K562 (cell line): ENCODE measurements at regions of chr1 and their contacts with region 1.

Region 1: DNA sequence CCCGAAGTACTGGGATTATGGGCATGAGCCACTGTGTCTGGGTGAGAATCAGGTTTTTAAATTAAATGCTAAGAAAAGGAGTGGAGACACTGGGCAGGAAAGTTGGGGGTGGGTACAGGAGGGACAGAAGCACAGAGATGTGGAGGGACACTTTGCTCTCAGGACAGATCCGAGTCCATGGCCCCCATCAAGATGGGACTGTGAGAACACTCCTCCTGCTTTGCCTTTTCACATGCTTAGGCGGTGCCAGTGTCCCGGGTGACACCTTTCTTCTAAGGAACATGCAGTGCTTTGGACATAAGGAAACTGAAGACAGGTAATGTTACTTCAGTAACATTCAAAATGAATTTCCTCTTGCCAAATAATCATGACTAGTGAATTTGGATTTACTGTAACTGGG is 16.7 kb downstream of the SLC25A33 start:
- DNase-seq: no peak
- ATAC-seq: no peak
- H3K4me3 ChIP-seq: no peak overlapping the region
- H3K27ac ChIP-seq: no peak overlapping the region
- H3K4me1 ChIP-seq: peaks cover 0 to 3% of the 10 kb centered on the region in 2 experiments; a peak in 1 of 5 replicates
- H3K27me3 ChIP-seq: no peaks in the 10 kb centered on the region
- CTCF ChIP-seq: no peak
- EP300 ChIP-seq: no peak
- POLR2A ChIP-seq: no peak
- RAD21 ChIP-seq: no peak

Region 2: GRCh38 chr1:8992936-8993687 is 562.8 kb before region 1 on chr1:
- CTCF ChIA-PET with region 1: no interaction called
- POLR2A ChIA-PET with region 1: no interaction called
- in situ Hi-C with region 1: no loop called
- intact Hi-C with region 1: no loop called
- DNase-seq: no peak
- ATAC-seq: no peak
- H3K4me3 ChIP-seq: no peak overlapping the region
- H3K27ac ChIP-seq: no peak overlapping the region
- H3K4me1 ChIP-seq: no peaks in the 10 kb centered on the region
- H3K27me3 ChIP-seq: peaks cover 7 to 19% of the 10 kb centered on the region in 2 experiments; a peak in 4 of 5 replicates
- CTCF ChIP-seq: no peak
- EP300 ChIP-seq: no peak
- POLR2A ChIP-seq: no peak
- RAD21 ChIP-seq: no peak

Region 3: GRCh38 chr1:9428601-9429341 is 127.2 kb before region 1 on chr1:
- CTCF ChIA-PET with region 1: no interaction called
- POLR2A ChIA-PET with region 1: no interaction called
- in situ Hi-C with region 1: no loop called
- intact Hi-C with region 1: no loop called
- DNase-seq: peak; percentile 98 to 100 (median 98)
- ATAC-seq: peak; percentile 99
- H3K4me3 ChIP-seq: peak overlapping the region; percentile 41
- H3K27ac ChIP-seq: peak overlapping the region; percentile 57
- H3K4me1 ChIP-seq: peaks cover 5 to 10% of the 10 kb centered on the region in 2 experiments; a peak in 3 of 5 replicates
- H3K27me3 ChIP-seq: peaks cover 16 to 21% of the 10 kb centered on the region in 2 experiments
- CTCF ChIP-seq: peak in 1 of 3 experiments; percentile 20; a peak in 1 of 6 replicates
- EP300 ChIP-seq: peak; percentile 46
- POLR2A ChIP-seq: peak; percentile 84
- RAD21 ChIP-seq: 0 out of 4 replicates have a peak, but pooled peaks of 1 of the 2 experiments have one; percentile 2

Region 4: DNA sequence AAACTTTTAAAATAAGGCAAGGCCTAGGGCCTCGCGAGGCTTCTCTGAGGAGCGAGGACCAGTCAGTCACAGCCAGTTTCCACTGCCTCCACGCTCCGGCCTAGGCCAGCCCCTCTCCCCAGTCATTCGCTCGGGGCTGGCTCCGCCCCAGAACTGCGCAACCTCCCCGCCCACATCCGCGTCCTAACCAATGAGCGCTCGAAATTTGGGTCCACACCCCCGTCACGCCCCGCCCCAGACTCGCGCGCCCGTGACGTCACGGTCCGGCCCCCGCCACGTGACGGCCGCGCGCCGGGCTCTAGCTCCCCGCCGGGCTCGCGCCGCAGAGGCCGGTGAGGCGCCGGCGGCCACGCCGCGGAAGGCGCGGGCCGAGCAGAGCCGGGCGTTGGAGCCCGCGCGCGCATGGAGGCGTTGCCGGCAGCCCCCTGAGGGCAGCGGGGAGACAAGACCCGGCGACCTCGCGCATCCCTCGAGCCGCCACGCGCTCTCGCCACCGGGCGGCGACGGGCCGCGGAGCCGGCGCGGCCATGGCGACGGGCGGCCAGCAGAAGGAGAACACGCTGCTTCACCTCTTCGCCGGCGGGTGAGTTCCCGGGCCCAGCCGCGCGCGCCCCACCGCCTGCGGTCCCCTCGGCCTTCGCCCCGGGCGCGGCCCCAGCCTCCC is 16.6 kb before region 1 on chr1 and contains the start of gene SLC25A33:
- CTCF ChIA-PET with region 1: interaction called, 3 read pairs
- POLR2A ChIA-PET with region 1: interaction called, 18 read pairs
- in situ Hi-C with region 1: no loop called
- intact Hi-C with region 1: no loop called
- DNase-seq: peak; percentile 99
- ATAC-seq: peak; percentile 97
- H3K4me3 ChIP-seq: peak within 1 kb of the TSS; percentile 87
- H3K27ac ChIP-seq: peak within 1 kb of the TSS; percentile 85
- H3K4me1 ChIP-seq: peaks cover 23 to 32% of the 10 kb centered on the region in 2 experiments
- H3K27me3 ChIP-seq: no peaks in the 10 kb centered on the region
- CTCF ChIP-seq: no peak
- EP300 ChIP-seq: peak; percentile 49
- POLR2A ChIP-seq: peak; percentile 85
- RAD21 ChIP-seq: no peak; a peak in 1 of 4 replicates
- polyA plus RNA-seq, gene SLC25A33: 3.2 to 6.4 TPM

Region 5: DNA sequence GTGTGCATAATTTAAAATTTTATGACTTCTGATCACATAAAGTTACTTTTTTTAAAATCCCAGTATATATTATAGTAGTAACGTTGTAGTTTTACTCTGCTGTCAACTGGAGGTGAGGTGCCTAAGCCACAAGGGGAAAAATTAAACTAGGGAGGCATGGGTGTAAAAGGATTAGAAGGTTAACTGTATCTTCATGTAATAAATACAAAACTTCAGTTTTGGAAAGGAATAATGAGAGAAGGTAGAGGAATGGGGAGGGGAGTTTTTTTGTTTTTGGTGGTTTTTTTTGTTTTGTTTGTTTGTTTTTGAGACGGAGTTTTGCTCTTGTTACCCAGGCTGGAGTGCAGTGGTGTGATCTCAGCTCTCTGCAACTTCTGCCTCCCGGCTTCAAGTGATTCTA is 11.0 kb before region 1 on chr1:
- CTCF ChIA-PET with region 1: interaction called, 3 read pairs
- POLR2A ChIA-PET with region 1: interaction called, 18 read pairs
- in situ Hi-C with region 1: no loop called
- intact Hi-C with region 1: no loop called
- DNase-seq: no peak
- ATAC-seq: no peak
- H3K4me3 ChIP-seq: no peak overlapping the region
- H3K27ac ChIP-seq: 0 out of 3 replicates have a peak overlapping the region, but pooled peaks have one; percentile 4
- H3K4me1 ChIP-seq: peaks cover 11 to 16% of the 10 kb centered on the region in 2 experiments
- H3K27me3 ChIP-seq: no peaks in the 10 kb centered on the region
- CTCF ChIP-seq: no peak
- EP300 ChIP-seq: no peak
- POLR2A ChIP-seq: no peak
- RAD21 ChIP-seq: no peak